ENCODE measurements at regions of chr2 and their contacts with region 1.

Region 1: DNA sequence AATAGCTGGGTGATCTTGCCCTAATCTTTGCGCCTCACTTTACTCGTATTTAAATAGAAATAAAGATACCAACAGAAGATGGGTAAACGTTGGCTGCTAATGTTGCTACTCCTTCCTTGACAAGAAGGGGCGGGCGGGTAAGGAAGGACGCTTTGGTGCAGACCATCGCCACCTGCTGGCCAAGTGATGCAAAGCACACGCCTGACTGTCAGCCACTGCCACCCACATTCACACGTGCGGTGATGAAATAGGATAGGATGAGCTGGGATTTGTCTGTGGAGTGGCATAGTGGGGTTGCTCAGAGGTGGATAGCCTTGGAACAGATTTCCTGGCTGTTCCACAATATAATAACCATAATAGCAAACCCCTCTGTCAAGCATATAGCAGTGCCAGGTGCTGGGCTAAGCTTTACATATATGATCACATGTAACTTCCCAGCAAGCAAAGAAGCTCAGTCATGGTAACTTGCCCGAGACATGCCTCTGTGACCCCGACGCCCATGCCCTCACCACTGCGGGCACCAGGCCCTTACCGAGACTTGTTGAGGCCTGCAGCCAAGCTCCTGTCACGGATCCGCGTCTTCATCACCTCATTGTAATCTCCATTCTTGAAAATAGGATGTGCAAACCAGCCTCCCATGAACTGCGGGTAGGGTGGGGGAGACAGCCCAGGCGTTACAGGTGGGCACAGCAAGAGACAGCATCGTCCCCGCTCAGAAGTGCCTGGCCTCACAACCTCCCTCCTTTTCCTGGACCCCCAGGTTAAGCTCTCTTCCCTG is 39.3 kb downstream of the LCT start:
- DNase-seq: peak; percentile 75 to 82
- ATAC-seq: peak; percentile 86 to 95
- H3K4me3 ChIP-seq: no peak overlapping the region
- H3K27ac ChIP-seq: peak overlapping the region in 1 of 2 experiments; percentile 46; a peak in 2 of 6 replicates
- H3K4me1 ChIP-seq: no peaks in the 10 kb centered on the region
- CTCF ChIP-seq: peak; percentile 86
- EP300 ChIP-seq: no peak
- POLR2A ChIP-seq: no peak
- RAD21 ChIP-seq: peak; percentile 41 to 59; a peak in 3 of 5 replicates

Region 2: GRCh38 chr2:134988994-134989605 is 808.6 kb before region 1 on chr2:
- CTCF ChIA-PET with region 1: interaction called, 15 read pairs
- POLR2A ChIA-PET with region 1: no interaction called
- DNase-seq: peak; percentile 18 to 40
- ATAC-seq: peak; percentile 80 to 90
- H3K4me3 ChIP-seq: no peak overlapping the region
- H3K27ac ChIP-seq: no peak overlapping the region
- H3K4me1 ChIP-seq: no peaks in the 10 kb centered on the region
- CTCF ChIP-seq: peak; percentile 70
- EP300 ChIP-seq: no peak
- POLR2A ChIP-seq: no peak
- RAD21 ChIP-seq: peak; percentile 67 to 70

Region 3: GRCh38 chr2:135755573-135755972 is 42.1 kb before region 1 on chr2:
- CTCF ChIA-PET with region 1: interaction called, 10 read pairs
- POLR2A ChIA-PET with region 1: no interaction called
- DNase-seq: no peak
- ATAC-seq: no peak
- H3K4me3 ChIP-seq: no peak overlapping the region
- H3K27ac ChIP-seq: no peak overlapping the region
- H3K4me1 ChIP-seq: no peaks in the 10 kb centered on the region
- CTCF ChIP-seq: no peak
- EP300 ChIP-seq: no peak
- POLR2A ChIP-seq: no peak
- RAD21 ChIP-seq: no peak

Region 4: GRCh38 chr2:135785032-135785431 is 12.7 kb before region 1 on chr2:
- CTCF ChIA-PET with region 1: interaction called, 16 read pairs
- POLR2A ChIA-PET with region 1: no interaction called
- DNase-seq: no peak
- ATAC-seq: peak in 1 of 2 experiments; percentile 51; a peak in 1 of 6 replicates
- H3K4me3 ChIP-seq: no peak overlapping the region
- H3K27ac ChIP-seq: no peak overlapping the region
- H3K4me1 ChIP-seq: no peaks in the 10 kb centered on the region
- CTCF ChIP-seq: no peak
- EP300 ChIP-seq: no peak
- POLR2A ChIP-seq: no peak
- RAD21 ChIP-seq: no peak

Region 5: GRCh38 chr2:135839713-135840112 is 42.0 kb after region 1 on chr2:
- CTCF ChIA-PET with region 1: interaction called, 12 read pairs
- POLR2A ChIA-PET with region 1: no interaction called
- DNase-seq: no peak
- ATAC-seq: no peak
- H3K4me3 ChIP-seq: no peak overlapping the region
- H3K27ac ChIP-seq: no peak overlapping the region
- H3K4me1 ChIP-seq: peaks cover 2% of the 10 kb centered on the region; the same call in 1 of the 3 replicates
- CTCF ChIP-seq: no peak
- EP300 ChIP-seq: no peak
- POLR2A ChIP-seq: no peak
- RAD21 ChIP-seq: no peak

Measured in A549 (cell line).